Mammary epithelial cell (primary cell): ENCODE measurements at regions of chr10 and their contacts with region 1.

Region 1: GRCh38 chr10:17617031-17617911 is at the start of gene HACD1:
- DNase-seq: peak; percentile 79
- H3K4me3 ChIP-seq: peak within 1 kb of the TSS; percentile 60 to 96 (median 82)
- H3K27ac ChIP-seq: peak within 1 kb of the TSS; percentile 60
- H3K4me1 ChIP-seq: peaks cover 7% of the 10 kb centered on the region
- H3K27me3 ChIP-seq: no peaks in the 10 kb centered on the region
- CTCF ChIP-seq: peak in 1 of 2 donors; percentile 33
- total RNA-seq, gene HACD1: 30.3 to 35.4 TPM

Region 2: GRCh38 chr10:17643755-17644484 is 26.6 kb after region 1 on chr10 and contains the start of gene STAM:
- CTCF ChIA-PET with region 1: interaction called, 5 read pairs
- dilution Hi-C with region 1: no loop called
- in situ Hi-C with region 1: no loop called
- intact Hi-C with region 1: loop called (anchors 1 kb)
- DNase-seq: peak; percentile 90
- H3K4me3 ChIP-seq: peak within 1 kb of the TSS; percentile 83 to 93 (median 83)
- H3K27ac ChIP-seq: peak within 1 kb of the TSS; percentile 98
- H3K4me1 ChIP-seq: peaks cover 21% of the 10 kb centered on the region
- H3K27me3 ChIP-seq: no peaks in the 10 kb centered on the region
- CTCF ChIP-seq: no peak
- total RNA-seq, gene STAM: 32.0 to 35.9 TPM

Region 3: DNA sequence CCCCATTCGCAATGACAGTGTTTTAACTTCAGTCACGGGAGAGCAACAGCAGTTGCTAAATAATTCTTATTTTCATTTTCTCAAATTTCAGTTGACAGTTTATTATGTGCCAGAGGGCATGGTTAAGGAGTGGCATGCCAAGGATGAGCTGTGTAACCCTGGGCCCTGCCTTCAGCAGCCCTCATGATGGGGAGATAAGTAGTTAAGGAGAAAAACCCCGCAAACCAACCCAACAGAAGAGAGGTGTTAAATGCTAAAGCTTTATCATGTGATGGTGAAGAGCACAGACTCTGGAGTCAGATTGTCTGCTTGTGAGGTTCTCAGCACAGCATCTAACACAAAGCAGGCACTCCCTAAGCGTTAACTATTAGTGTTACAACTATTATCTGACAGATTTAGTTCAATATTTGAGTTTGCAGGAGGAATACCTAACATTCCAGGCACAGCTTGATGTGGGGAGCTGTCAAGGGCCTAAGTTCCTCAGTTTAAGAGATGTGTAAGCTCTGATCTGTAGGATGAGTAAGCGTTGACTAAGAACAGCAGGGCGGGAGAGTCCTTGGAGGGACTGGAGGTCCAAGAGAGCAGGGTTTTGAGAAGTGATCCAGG is 56.3 kb after region 1 on chr10:
- CTCF ChIA-PET with region 1: no interaction called
- dilution Hi-C with region 1: no loop called
- in situ Hi-C with region 1: no loop called
- intact Hi-C with region 1: loop called (anchors 5 kb)
- DNase-seq: peak; percentile 86
- H3K4me3 ChIP-seq: no peak overlapping the region
- H3K27ac ChIP-seq: peak overlapping the region; percentile 6
- H3K4me1 ChIP-seq: peaks cover 22% of the 10 kb centered on the region
- H3K27me3 ChIP-seq: no peaks in the 10 kb centered on the region
- CTCF ChIP-seq: no peak

Region 4: DNA sequence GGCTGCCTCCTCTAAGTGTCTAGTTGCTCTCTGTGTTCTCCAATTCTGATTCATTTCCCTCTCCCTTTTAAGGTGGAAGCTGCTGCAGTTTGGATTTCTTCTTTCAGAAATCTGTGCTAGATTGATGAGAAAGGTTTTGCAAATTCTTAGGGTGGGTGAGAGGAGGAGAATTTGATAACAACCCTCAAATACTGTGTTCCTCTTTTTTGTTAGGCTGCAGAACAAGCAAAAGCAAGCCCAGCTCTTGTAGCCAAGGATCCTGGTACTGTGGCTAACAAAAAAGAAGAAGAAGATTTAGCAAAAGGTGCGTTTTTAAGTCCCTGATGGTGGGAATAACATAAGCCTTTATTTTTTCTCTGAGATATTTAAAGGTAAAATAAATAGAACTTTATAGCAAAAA is 75.7 kb after region 1 on chr10:
- CTCF ChIA-PET with region 1: no interaction called
- dilution Hi-C with region 1: loop called (anchors 5 kb)
- in situ Hi-C with region 1: no loop called
- intact Hi-C with region 1: no loop called
- DNase-seq: no peak
- H3K4me3 ChIP-seq: no peak overlapping the region
- H3K27ac ChIP-seq: no peak overlapping the region
- H3K4me1 ChIP-seq: no peaks in the 10 kb centered on the region
- H3K27me3 ChIP-seq: no peaks in the 10 kb centered on the region
- CTCF ChIP-seq: no peak

Region 5: GRCh38 chr10:17872191-17873091 is 255.2 kb after region 1 on chr10:
- CTCF ChIA-PET with region 1: no interaction called
- dilution Hi-C with region 1: no loop called
- in situ Hi-C with region 1: loop called in 1 of 2 experiments (anchors 25 kb)
- intact Hi-C with region 1: no loop called
- DNase-seq: peak; percentile 8
- H3K4me3 ChIP-seq: no peak overlapping the region
- H3K27ac ChIP-seq: no peak overlapping the region
- H3K4me1 ChIP-seq: no peaks in the 10 kb centered on the region
- H3K27me3 ChIP-seq: no peaks in the 10 kb centered on the region
- CTCF ChIP-seq: peak; percentile 36 to 59

Region 6: GRCh38 chr10:18238870-18239485 is 621.7 kb after region 1 on chr10:
- CTCF ChIA-PET with region 1: no interaction called
- dilution Hi-C with region 1: no loop called
- in situ Hi-C with region 1: loop called in 1 of 2 experiments (anchors 25 kb)
- intact Hi-C with region 1: no loop called
- DNase-seq: peak; percentile 20
- H3K4me3 ChIP-seq: no peak overlapping the region
- H3K27ac ChIP-seq: no peak overlapping the region
- H3K4me1 ChIP-seq: no peaks in the 10 kb centered on the region
- H3K27me3 ChIP-seq: no peaks in the 10 kb centered on the region
- CTCF ChIP-seq: peak; percentile 51 to 60